GM18951 (cell line): ENCODE measurements at regions of chr9 and their contacts with region 1.

Region 1: DNA sequence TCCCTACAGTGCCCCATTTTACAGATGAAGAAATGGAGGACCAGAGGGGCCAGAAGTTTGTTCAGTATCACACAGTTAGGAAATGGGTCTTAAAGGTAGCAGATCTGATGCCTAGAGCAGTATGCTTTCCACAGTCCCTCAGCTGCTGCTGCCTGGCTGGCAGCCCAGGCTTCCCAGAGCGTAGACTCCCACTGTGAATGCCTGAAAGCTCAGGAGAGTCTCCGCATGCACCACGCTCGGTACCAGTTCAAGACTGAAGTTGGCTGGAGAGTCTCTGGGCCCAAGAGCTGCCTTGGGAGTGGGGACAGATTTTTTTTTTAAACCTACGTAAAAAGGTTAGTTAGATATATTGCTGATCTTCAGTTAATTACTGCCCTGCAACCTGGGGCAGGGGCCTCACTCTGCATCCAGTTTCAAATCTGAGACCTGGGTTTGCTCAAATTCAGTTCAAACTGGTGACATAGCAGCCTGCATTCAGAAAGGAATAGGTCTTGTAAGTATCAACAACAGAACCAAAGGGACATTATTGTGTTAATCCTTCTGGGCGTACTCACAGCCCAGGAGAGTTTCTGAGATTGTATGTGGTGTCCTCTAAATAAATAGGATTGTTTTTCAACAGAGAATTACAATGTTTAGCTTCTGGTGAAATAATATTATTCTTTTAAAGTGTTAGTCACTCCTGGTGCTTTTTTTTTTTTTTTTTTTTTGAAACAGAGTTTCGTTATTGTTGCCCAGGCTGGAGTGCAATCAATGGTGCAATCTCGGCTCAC is 8.3 kb downstream of the NANS start:
- POLR2A ChIP-seq: no peak

Region 2: GRCh38 chr9:97559111-97559514 is 505.7 kb before region 1 on chr9:
- in situ Hi-C with region 1: no loop called
- POLR2A ChIP-seq: no peak

Region 3: GRCh38 chr9:98263482-98264357 is 198.9 kb after region 1 on chr9:
- in situ Hi-C with region 1: loop called (anchors 10 kb)
- POLR2A ChIP-seq: no peak

Region 4: GRCh38 chr9:99576002-99576401 is 1511.2 kb after region 1 on chr9:
- in situ Hi-C with region 1: no loop called
- POLR2A ChIP-seq: no peak